ENCODE measurements at regions of chr11 and their contacts with region 1.

Region 1: DNA sequence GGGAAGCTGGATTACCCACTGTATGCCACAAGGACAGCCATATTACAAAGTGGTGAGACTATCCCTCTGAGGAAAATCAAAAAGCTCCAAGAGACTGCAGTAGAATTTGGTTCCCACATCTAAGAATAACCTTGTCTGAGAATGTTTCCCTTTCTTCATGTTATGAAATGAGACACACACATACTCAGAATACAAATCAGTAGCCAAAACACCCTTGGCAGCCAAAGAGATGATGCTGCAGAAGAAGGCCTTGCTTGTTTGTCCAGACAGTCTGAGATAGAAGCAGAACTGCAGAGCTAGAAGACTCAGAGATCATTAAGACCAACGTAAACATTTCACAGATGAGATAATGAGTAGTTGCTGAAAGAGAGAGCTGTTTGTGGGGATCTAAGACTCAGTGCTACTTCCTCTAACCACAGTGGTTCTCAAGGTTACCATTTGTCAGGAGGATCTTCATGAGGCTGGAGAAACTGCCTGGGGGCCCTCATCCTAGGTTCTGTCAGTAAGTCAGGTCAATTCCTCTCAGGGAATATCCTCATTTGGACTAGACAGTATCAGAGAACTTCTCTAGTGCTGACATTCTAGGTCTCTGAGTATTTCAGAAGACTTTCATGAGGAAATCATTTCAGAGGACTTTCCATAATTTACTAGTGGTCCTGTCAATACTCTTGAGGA is 38.9 kb downstream of the RELT start:
- DNase-seq: peak; percentile 38
- ATAC-seq: peak; percentile 69
- H3K4me3 ChIP-seq: no peak overlapping the region
- H3K27ac ChIP-seq: no peak overlapping the region; the same call in 1 of the 2 replicates
- H3K4me1 ChIP-seq: peaks cover 9% of the 10 kb centered on the region; the same call in 1 of the 2 replicates
- H3K27me3 ChIP-seq: no peaks in the 10 kb centered on the region
- CTCF ChIP-seq: no peak
- EP300 ChIP-seq: no peak
- POLR2A ChIP-seq: no peak
- RAD21 ChIP-seq: no peak

Region 2: DNA sequence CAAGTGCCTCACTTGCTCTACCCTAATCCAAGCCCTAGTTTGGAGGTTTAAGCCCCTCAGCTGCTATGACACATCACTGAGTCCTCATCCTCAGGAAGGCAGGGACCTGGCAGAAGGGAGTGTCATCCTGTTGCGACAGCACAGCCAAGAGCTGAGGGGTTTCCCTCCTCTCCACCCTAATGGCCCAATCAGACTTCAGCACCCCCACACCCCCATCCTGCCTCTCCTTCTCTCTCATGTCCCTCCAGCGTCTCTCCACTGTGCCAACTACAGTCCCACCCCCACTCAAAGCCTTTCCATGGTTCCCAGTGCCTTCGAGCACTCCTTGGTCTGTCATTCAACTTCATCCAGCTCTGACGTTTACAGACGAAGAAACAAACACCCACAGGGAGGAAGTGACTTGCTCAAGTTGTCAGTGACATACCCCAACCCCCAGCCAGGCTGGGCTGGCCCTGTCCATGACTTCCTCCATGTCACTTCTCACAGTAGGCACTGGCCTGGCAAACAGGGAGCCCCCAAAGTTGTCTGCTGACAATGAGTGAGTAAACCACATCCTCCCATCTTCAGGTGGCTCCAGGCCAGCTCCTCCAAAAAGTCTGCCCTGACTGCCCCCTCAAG is 678.6 kb before region 1 on chr11:
- CTCF ChIA-PET with region 1: no interaction called
- POLR2A ChIA-PET with region 1: no interaction called
- RAD21 ChIA-PET with region 1: no interaction called
- SMC1A ChIA-PET with region 1: no interaction called
- in situ Hi-C with region 1: no loop called
- intact Hi-C with region 1: no loop called
- DNase-seq: no peak
- ATAC-seq: peak; percentile 26
- H3K4me3 ChIP-seq: peak overlapping the region; percentile 25
- H3K27ac ChIP-seq: peak overlapping the region; percentile 72
- H3K4me1 ChIP-seq: peaks cover 54% of the 10 kb centered on the region
- H3K27me3 ChIP-seq: no peaks in the 10 kb centered on the region
- CTCF ChIP-seq: no peak
- EP300 ChIP-seq: no peak
- POLR2A ChIP-seq: no peak
- RAD21 ChIP-seq: no peak

Region 3: GRCh38 chr11:73404048-73404447 is 11.1 kb before region 1 on chr11:
- CTCF ChIA-PET with region 1: interaction called, 7 read pairs
- POLR2A ChIA-PET with region 1: interaction called, 6 read pairs
- RAD21 ChIA-PET with region 1: interaction called, 3 read pairs
- SMC1A ChIA-PET with region 1: interaction called, 17 read pairs
- in situ Hi-C with region 1: no loop called
- intact Hi-C with region 1: no loop called
- DNase-seq: no peak
- ATAC-seq: no peak
- H3K4me3 ChIP-seq: no peak overlapping the region
- H3K27ac ChIP-seq: no peak overlapping the region
- H3K4me1 ChIP-seq: no peaks in the 10 kb centered on the region
- H3K27me3 ChIP-seq: no peaks in the 10 kb centered on the region
- CTCF ChIP-seq: peak in 2 of 3 experiments; percentile 13 to 31; a peak in 3 of 6 replicates
- EP300 ChIP-seq: no peak
- POLR2A ChIP-seq: no peak
- RAD21 ChIP-seq: peak; percentile 47

Region 4: GRCh38 chr11:73426219-73426850 is 11.2 kb after region 1 on chr11:
- CTCF ChIA-PET with region 1: interaction called, 19 read pairs
- POLR2A ChIA-PET with region 1: interaction called, 3 read pairs
- RAD21 ChIA-PET with region 1: interaction called, 3 read pairs
- SMC1A ChIA-PET with region 1: interaction called, 12 read pairs
- in situ Hi-C with region 1: no loop called
- intact Hi-C with region 1: no loop called
- DNase-seq: no peak
- ATAC-seq: no peak
- H3K4me3 ChIP-seq: no peak overlapping the region
- H3K27ac ChIP-seq: no peak overlapping the region
- H3K4me1 ChIP-seq: peaks cover 3% of the 10 kb centered on the region; the same call in 1 of the 2 replicates
- H3K27me3 ChIP-seq: no peaks in the 10 kb centered on the region
- CTCF ChIP-seq: no peak
- EP300 ChIP-seq: no peak
- POLR2A ChIP-seq: no peak
- RAD21 ChIP-seq: no peak

Region 5: DNA sequence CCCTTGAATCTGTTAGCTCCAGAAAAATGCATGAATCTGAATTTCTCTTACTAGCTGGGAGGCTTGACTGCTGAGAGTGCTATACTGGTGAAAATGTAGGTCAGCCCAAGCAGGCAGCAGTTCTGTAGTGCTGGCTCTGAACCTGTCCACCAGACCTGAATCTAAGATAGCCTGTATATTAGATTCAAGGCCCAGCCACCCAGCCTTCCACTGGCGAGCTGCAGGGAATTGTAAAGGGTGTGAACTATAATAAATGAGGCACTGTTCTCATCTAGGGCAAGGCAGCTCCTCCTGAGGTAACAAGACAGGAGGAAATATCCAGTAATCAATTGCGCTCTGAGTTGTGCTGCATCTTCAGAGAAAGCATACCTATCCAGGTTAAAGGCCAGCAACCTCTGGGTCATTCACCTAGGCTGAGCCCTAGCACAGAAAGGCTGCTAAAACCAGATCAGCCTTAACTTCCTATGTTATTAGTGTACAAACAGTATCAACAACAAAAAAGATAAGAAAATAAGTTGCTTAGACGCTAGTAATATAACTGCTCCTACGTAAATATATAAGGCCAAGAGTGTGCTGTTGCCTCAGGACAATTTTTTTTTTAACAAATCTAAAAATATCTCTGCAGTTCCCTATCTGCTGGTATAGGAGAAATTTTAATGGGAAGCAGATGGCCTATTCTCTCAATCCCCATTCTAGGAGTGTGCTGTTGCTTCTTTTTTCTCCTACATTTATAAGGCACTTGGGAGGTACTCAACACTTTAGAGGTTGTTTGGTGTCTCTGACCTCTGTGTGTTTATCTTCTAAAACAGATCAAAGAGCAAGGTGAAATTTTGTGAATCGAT is 24.1 kb after region 1 on chr11:
- CTCF ChIA-PET with region 1: interaction called, 11 read pairs
- POLR2A ChIA-PET with region 1: no interaction called
- RAD21 ChIA-PET with region 1: no interaction called
- SMC1A ChIA-PET with region 1: interaction called, 12 read pairs
- in situ Hi-C with region 1: no loop called
- intact Hi-C with region 1: no loop called
- DNase-seq: no peak
- ATAC-seq: no peak
- H3K4me3 ChIP-seq: no peak overlapping the region
- H3K27ac ChIP-seq: no peak overlapping the region
- H3K4me1 ChIP-seq: no peaks in the 10 kb centered on the region
- H3K27me3 ChIP-seq: no peaks in the 10 kb centered on the region
- CTCF ChIP-seq: no peak
- EP300 ChIP-seq: no peak
- POLR2A ChIP-seq: no peak
- RAD21 ChIP-seq: no peak

Region 6: GRCh38 chr11:73445980-73446379 is 30.9 kb after region 1 on chr11:
- CTCF ChIA-PET with region 1: interaction called, 3 read pairs
- POLR2A ChIA-PET with region 1: no interaction called
- RAD21 ChIA-PET with region 1: no interaction called
- SMC1A ChIA-PET with region 1: interaction called, 11 read pairs
- in situ Hi-C with region 1: no loop called
- intact Hi-C with region 1: no loop called
- DNase-seq: no peak
- ATAC-seq: no peak
- H3K4me3 ChIP-seq: no peak overlapping the region
- H3K27ac ChIP-seq: no peak overlapping the region
- H3K4me1 ChIP-seq: no peaks in the 10 kb centered on the region
- H3K27me3 ChIP-seq: no peaks in the 10 kb centered on the region
- CTCF ChIP-seq: no peak
- EP300 ChIP-seq: no peak
- POLR2A ChIP-seq: no peak
- RAD21 ChIP-seq: no peak